Activated T-helper 1 cell treated with anti-CD3 and anti-CD28 coated beads, Interleukin-12 subunit alpha, Interleukin-12 subunit beta, Interleukin-2, Interleukin-4 antibody, amounts not matched to agents 30 ng/mL and 10 ng/mL and 1 ng/mL, durations not matched to agents 14 hours and 24 hours and 36 hours (primary cell): ENCODE measurements at regions of chr5 and their contacts with region 1.

Region 1: GRCh38 chr5:141524604-141525597 is 36.0 kb downstream of the PCDHGC5 start:
- DNase-seq: no peak
- H3K4me3 Mint-ChIP-seq: no peak overlapping the region
- H3K27ac Mint-ChIP-seq: peak overlapping the region; percentile 29
- H3K4me1 Mint-ChIP-seq: peaks cover 38% of the 10 kb centered on the region
- H3K27me3 Mint-ChIP-seq: no peaks in the 10 kb centered on the region

Region 2: DNA sequence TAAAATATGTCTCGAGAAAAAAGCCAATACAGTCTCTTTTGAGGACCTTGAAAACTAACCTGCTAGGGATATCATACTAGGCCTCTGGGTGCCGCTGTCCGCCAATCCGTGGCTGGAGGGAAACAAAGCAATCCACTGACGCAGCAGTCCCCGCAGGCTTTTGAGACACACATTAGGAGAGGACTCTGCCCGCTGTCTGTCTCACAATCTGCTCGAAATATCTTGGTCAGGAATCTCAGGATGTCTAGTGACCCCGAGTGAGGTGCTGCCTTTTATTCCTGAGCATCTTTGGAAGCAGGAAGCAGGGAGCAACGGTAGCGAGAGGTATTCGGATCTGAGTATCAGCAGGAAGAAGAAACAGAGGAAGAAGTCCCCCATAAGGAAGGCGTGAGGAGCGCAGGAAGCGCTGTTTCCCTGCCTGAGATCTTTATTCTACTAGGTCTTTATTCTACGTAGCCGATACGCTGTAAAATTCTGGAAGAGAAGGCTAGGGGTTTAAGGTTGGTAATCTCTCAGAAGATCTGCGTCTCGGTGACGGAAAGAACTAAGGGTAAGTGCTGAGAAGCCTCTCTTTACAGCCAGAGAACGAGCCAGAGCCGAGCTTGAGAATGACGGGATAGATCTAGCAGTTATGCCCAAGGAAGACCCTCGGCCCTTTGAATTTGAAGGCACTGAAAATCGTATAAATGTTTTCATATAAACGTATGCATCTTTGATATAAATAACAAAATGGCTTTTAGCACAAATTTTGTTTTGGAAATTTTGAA is 198.6 kb before region 1 on chr5:
- intact Hi-C with region 1: loop called (anchors 1 kb)
- DNase-seq: peak; percentile 59
- H3K4me3 Mint-ChIP-seq: peak overlapping the region; percentile 98
- H3K27ac Mint-ChIP-seq: peak overlapping the region; percentile 83
- H3K4me1 Mint-ChIP-seq: peaks cover 16% of the 10 kb centered on the region
- H3K27me3 Mint-ChIP-seq: peaks cover 12% of the 10 kb centered on the region

Region 3: GRCh38 chr5:141359790-141360426 is 165.0 kb before region 1 on chr5 and contains the start of gene PCDHGB2:
- intact Hi-C with region 1: loop called (anchors 5 kb)
- DNase-seq: no peak
- H3K4me3 Mint-ChIP-seq: peak within 1 kb of the TSS; percentile 85
- H3K27ac Mint-ChIP-seq: peak within 1 kb of the TSS; percentile 68
- H3K4me1 Mint-ChIP-seq: peaks cover 6% of the 10 kb centered on the region
- H3K27me3 Mint-ChIP-seq: peaks cover 19% of the 10 kb centered on the region
- total RNA-seq, gene PCDHGB2: 0.47 and 0.93 TPM in 2 replicates

Region 4: DNA sequence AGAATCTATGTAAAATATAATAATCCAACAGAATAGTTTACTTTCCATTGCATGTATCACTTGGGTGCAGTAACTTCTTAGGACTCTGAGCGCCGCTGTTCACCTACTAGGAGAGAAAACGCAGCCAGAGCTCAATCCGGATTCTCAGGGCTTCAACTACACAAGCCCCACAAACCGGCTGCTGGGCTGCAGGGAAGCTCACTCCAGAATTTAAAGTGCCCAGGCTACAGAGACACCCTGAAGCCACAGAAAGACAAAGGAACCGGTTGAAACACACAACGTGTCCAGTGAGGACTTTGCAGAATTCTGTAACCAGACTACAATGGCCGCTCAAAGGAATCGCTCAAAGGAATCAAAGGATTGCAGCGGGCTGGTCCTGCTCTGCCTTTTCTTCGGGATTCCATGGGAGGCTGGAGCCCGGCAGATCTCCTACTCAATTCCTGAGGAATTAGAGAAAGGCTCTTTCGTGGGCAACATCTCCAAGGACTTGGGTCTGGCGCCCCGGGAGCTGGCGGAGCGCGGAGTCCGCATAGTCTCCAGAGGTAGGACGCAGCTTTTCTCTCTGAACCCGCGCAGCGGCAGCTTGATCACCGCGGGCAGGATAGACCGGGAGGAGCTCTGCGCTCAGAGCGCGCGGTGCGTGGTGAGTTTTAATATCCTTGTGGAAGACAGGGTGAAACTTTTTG is 111.9 kb before region 1 on chr5 and contains the start of gene PCDHGA10:
- intact Hi-C with region 1: loop called (anchors 1 kb)
- DNase-seq: peak; percentile 33
- H3K4me3 Mint-ChIP-seq: peak within 1 kb of the TSS; percentile 84
- H3K27ac Mint-ChIP-seq: peak within 1 kb of the TSS; percentile 68
- H3K4me1 Mint-ChIP-seq: peaks cover 13% of the 10 kb centered on the region
- H3K27me3 Mint-ChIP-seq: peaks cover 44% of the 10 kb centered on the region
- total RNA-seq, gene PCDHGA10: 0.10 and 0.13 TPM in 2 replicates

Region 5: GRCh38 chr5:141475625-141476131 is 49.2 kb before region 1 on chr5 and contains the start of gene PCDHGC3:
- intact Hi-C with region 1: loop called (anchors 1 kb)
- DNase-seq: peak; percentile 13
- H3K4me3 Mint-ChIP-seq: peak within 1 kb of the TSS; percentile 90
- H3K27ac Mint-ChIP-seq: no peak within 1 kb of the TSS
- H3K4me1 Mint-ChIP-seq: peaks cover 16% of the 10 kb centered on the region
- H3K27me3 Mint-ChIP-seq: peaks cover 53% of the 10 kb centered on the region
- total RNA-seq, gene PCDHGC3: 0.31 and 0.32 TPM in 2 replicates

Region 6: DNA sequence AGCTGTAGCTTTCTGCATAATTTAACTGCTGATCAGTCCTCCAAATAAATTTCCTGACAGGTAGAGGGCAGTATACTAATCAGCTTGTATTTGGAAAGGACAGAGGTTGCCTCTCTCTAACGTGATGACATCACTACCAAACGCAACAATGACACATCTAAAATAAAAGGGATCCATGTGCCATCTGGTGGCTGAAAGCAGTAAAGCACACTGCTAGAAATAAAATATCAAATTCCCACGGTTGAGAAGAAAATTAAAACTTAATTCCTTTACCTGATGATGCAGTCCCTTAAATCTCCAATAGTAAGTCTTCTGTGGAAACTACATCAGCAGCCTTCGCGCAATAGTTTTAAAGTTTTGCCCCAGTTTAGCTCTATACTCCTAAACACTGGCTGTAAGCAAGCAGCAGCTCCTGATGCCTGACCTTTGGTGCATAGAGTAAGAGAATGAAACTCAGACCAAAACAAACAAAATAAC is 39.4 kb after region 1 on chr5:
- intact Hi-C with region 1: loop called (anchors 2 kb)
- DNase-seq: peak; percentile 65
- H3K4me3 Mint-ChIP-seq: peak overlapping the region; percentile 6
- H3K27ac Mint-ChIP-seq: peak overlapping the region; percentile 88
- H3K4me1 Mint-ChIP-seq: peaks cover 31% of the 10 kb centered on the region
- H3K27me3 Mint-ChIP-seq: no peaks in the 10 kb centered on the region

Region 7: GRCh38 chr5:141664732-141665461 is 140.0 kb after region 1 on chr5:
- intact Hi-C with region 1: no loop called
- DNase-seq: peak; percentile 59
- H3K4me3 Mint-ChIP-seq: no peak overlapping the region
- H3K27ac Mint-ChIP-seq: no peak overlapping the region
- H3K4me1 Mint-ChIP-seq: no peaks in the 10 kb centered on the region
- H3K27me3 Mint-ChIP-seq: peaks cover 2% of the 10 kb centered on the region